ENCODE measurements at regions of chr15 and their contacts with region 1.

Region 1: GRCh38 chr15:101251830-101252820 is at the start of gene CHSY1:
- DNase-seq: peak; percentile 91
- H3K4me3 Mint-ChIP-seq: peak within 1 kb of the TSS; percentile 91
- H3K27ac Mint-ChIP-seq: peak within 1 kb of the TSS; percentile 86
- H3K4me1 Mint-ChIP-seq: peaks cover 51% of the 10 kb centered on the region
- H3K27me3 Mint-ChIP-seq: no peaks in the 10 kb centered on the region
- total RNA-seq, gene CHSY1: 34.8 to 36.3 TPM

Region 2: DNA sequence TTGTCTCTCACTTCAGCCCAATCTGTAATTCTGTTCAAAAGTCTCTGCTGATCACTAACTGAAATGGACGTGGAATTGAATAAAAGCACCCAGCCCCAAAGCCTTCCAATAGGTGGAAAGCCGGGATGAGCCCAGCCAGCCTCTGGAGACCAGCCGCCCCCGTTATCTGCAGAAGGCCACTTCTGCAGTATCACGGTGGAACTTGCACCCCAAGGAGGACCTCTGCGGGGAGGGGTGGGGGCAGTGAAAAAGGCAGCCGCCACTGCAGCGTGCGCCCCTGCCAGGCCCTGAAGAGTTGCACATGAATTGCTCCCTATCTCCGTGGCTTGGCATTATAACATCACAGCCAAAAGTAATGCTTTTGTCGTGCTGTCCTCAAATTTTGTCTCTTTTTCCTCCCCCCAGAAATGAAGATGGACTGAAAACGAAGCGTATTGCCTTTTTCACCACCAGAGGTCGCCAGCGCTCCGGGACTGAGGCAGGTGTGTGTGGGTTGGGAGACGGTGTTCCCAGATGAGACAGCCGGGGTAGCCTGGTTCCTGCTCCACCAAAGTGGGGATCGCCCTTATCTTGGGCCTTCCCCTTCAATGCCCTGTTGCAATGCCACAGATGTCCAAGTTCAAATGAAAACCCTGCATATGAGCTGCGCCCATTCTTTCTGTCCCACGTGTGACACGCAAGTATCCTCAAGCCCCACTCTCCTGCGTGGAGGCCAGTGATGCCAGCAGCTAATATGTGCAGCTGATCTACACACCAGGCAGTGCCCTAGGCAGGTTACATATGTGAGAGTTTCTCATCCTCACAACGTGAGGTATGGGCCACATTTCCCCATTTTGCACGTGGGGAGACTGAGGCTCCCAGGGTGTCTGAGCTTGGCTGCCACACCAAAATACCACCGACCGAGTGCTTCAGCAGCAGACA is 236.9 kb before region 1 on chr15:
- CTCF ChIA-PET with region 1: interaction called, 97 read pairs
- POLR2A ChIA-PET with region 1: no interaction called
- intact Hi-C with region 1: no loop called
- DNase-seq: peak; percentile 80
- H3K4me3 Mint-ChIP-seq: no peak overlapping the region
- H3K27ac Mint-ChIP-seq: no peak overlapping the region
- H3K4me1 Mint-ChIP-seq: peaks cover 4% of the 10 kb centered on the region
- H3K27me3 Mint-ChIP-seq: peaks cover 3% of the 10 kb centered on the region

Region 3: DNA sequence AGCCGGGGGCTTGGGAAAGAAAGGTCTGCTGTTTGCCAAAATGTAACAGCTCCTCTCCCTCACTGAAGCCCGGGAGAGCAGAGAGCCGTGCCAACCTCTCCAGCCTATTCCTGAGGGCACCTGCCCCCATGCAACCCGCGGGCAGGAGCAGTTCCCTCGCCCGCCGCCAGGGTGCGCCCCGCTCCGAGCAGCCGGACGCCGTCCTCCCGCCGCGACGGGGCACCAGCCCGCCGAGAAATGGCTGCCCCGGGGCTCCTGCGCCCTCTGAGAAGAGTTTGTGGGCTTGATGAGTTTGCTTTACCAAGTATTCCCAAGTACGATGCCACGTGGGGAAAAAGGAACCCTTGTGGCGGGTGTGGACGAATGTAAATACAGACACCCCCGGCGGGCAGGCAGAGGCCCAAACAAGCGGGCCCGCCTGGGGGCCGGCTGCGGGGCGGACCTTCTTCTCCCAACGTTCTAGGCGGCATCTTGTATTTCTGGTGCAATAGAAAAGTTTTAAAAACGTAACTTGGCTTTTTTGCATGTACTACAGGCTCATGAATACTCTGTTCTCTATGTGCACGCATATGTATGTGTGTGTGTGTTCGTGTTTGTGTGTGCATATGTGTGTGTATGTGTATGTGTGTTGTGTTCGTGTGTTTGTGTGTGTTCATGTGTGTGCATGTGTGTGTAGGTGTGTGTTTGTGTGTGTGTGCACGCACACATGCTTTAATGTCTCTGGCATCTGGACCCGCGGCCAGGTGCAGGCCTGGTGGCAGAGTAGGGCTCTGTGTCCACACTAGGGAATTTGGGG is 163.1 kb before region 1 on chr15:
- CTCF ChIA-PET with region 1: interaction called, 123 read pairs
- POLR2A ChIA-PET with region 1: interaction called, 3 read pairs
- intact Hi-C with region 1: no loop called
- DNase-seq: peak; percentile 84
- H3K4me3 Mint-ChIP-seq: no peak overlapping the region
- H3K27ac Mint-ChIP-seq: no peak overlapping the region
- H3K4me1 Mint-ChIP-seq: no peaks in the 10 kb centered on the region
- H3K27me3 Mint-ChIP-seq: peaks cover 1% of the 10 kb centered on the region

Region 4: DNA sequence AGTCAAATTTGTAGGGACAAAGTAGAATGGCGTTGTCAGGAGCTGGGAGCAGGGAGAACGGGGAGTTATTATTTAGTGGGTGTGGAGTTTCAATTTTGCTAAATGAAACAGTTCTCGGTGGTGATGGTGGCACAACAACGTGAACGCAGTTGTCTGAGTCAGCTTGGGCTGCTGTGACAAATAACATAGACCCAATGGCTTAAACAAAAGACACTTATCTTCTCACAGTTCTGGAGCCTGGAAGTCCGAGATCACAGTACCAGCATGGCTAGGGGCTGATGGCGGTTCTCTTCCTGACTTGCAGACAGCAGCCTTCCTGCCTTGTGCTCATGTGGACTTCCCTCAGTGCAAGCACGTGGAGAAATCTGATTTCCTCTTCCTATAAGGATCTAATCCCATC is 90.5 kb before region 1 on chr15:
- CTCF ChIA-PET with region 1: interaction called, 4 read pairs
- POLR2A ChIA-PET with region 1: interaction called, 3 read pairs
- intact Hi-C with region 1: loop called (anchors 2 kb)
- DNase-seq: peak; percentile 73
- H3K4me3 Mint-ChIP-seq: peak overlapping the region; percentile 4
- H3K27ac Mint-ChIP-seq: peak overlapping the region; percentile 75
- H3K4me1 Mint-ChIP-seq: peaks cover 33% of the 10 kb centered on the region
- H3K27me3 Mint-ChIP-seq: no peaks in the 10 kb centered on the region